Transverse colon (tissue), 4 donors: ENCODE measurements at regions of chr10 and their contacts with region 1.

Region 1: GRCh38 chr10:58291538-58292174 is 22.7 kb downstream of the CISD1 start:
- DNase-seq: no peak
- H3K4me3 ChIP-seq: no peak overlapping the region
- H3K27ac ChIP-seq: no peak overlapping the region
- H3K4me1 ChIP-seq: no peaks in the 10 kb centered on the region
- H3K27me3 ChIP-seq: no peaks in the 10 kb centered on the region
- CTCF ChIP-seq: peak; percentile 62 to 79 (median 69)
- EP300 ChIP-seq: no peak
- POLR2A ChIP-seq: no peak

Region 2: DNA sequence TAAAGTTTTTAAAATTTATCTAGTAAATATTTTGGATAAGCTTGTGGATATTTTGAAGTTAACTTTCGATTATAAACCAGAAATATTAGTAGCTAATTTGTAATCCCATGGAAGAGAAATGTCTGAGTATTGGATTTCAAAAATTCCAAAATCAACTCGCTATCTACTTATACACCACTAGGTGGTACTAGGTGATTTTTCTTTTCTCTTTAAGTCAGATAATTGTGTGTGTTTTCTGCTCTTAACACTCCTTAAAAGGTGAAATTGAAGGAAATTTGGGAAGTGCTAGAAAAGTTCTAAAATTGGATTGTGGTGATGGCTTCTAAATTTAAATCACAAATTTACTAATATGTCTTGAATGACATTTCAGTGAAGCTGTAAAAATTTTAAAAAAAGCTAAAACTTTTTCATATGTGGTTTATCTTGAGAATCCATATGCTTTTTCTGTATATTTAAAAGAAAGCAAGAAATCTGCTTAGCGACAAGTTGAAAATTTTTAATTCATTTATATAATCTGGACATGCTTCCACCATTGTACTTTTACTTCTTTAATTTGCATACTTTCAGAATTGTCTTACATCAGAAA is 114.2 kb before region 1 on chr10:
- in situ Hi-C with region 1: loop called in 3 of 4 experiments (anchors 5 to 10 kb)
- intact Hi-C with region 1: loop called (anchors 5 kb)
- DNase-seq: no peak
- H3K4me3 ChIP-seq: no peak overlapping the region
- H3K27ac ChIP-seq: no peak overlapping the region
- H3K4me1 ChIP-seq: no peaks in the 10 kb centered on the region
- H3K27me3 ChIP-seq: no peaks in the 10 kb centered on the region
- CTCF ChIP-seq: peak; percentile 56 to 68 (median 60)
- EP300 ChIP-seq: no peak
- POLR2A ChIP-seq: no peak

Region 3: DNA sequence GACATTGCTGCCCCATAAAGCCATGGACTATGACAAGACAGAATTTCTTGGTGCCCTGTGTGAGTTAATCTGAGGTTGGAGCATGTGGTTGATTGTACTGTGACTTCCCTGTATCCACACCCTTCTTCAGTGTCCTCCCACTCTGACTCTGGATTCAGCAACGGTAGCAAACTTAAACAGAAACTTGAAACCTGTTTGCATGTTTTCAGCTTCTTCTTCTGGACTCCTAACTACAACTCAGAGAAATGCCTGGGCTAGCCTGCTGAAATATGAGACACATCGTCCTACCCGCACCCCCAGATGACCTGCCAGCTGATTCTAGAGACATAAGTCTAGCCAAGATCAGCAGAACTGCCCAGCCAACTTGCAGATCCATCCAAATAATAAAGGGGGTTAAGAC is 102.4 kb before region 1 on chr10:
- in situ Hi-C with region 1: loop called in 3 of 4 experiments (anchors 5 to 10 kb)
- intact Hi-C with region 1: no loop called
- DNase-seq: no peak
- H3K4me3 ChIP-seq: no peak overlapping the region
- H3K27ac ChIP-seq: no peak overlapping the region
- H3K4me1 ChIP-seq: no peaks in the 10 kb centered on the region
- H3K27me3 ChIP-seq: no peaks in the 10 kb centered on the region
- CTCF ChIP-seq: no peak
- EP300 ChIP-seq: no peak
- POLR2A ChIP-seq: no peak

Region 4: DNA sequence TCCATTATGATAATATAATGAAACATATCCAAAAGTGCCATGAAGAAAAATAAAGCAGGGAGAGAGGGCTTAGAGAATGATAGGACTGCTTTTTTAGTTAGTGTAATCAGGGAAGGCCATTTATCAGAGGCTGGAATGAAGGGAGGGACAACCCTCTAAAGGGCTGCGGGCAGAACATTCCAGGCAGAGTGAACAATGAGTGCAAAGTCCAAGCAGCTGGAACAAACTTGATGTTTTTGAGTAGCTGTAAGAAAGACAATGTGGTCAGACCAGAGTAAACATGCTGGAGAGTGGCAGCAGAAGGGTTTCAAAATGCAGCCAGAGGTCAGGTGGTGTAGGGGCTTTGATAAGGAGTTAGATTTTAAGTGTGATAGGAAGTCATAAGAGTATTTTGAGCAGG is 1680.3 kb after region 1 on chr10:
- in situ Hi-C with region 1: no loop called
- intact Hi-C with region 1: no loop called
- DNase-seq: peak; percentile 59
- H3K4me3 ChIP-seq: no peak overlapping the region
- H3K27ac ChIP-seq: peak overlapping the region; percentile 17 to 35 (median 20)
- H3K4me1 ChIP-seq: peaks cover 0 to 17% (median 14%) of the 10 kb centered on the region in 4 donors
- H3K27me3 ChIP-seq: no peaks in the 10 kb centered on the region
- CTCF ChIP-seq: no peak
- EP300 ChIP-seq: no peak
- POLR2A ChIP-seq: no peak